Body of pancreas (tissue), 4 donors: ENCODE measurements at regions of chr17 and their contacts with region 1.

Region 1: DNA sequence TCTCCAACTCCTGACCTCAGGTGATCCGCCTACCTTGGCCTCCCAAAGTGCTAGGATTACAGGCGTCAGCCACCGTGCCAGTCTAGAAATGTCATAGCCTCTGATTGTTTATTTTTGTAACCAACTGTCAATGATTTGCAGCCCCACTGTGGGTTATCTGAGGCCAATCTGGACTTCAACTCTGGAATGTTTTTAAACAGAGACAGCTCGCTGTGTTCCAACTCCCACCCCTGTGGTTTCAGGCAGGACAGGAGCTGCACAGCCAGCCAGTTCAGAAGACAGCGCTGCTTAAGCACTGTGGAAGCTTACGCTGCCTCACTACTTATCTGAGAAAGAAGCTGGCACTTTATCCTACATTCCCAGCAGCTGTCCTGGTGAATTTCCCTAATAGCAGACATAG is 19.5 kb downstream of the MRM3 start:
- DNase-seq: peak in 3 of 4 donors; percentile 43 to 73 (median 65)
- ATAC-seq: peak; percentile 25
- H3K4me3 ChIP-seq: no peak overlapping the region
- H3K27ac ChIP-seq: peak overlapping the region; percentile 80 to 90 (median 88)
- H3K4me1 ChIP-seq: peaks cover 38% of the 10 kb centered on the region
- H3K27me3 ChIP-seq: no peaks in the 10 kb centered on the region
- CTCF ChIP-seq: no peak
- POLR2A ChIP-seq: no peak

Region 2: DNA sequence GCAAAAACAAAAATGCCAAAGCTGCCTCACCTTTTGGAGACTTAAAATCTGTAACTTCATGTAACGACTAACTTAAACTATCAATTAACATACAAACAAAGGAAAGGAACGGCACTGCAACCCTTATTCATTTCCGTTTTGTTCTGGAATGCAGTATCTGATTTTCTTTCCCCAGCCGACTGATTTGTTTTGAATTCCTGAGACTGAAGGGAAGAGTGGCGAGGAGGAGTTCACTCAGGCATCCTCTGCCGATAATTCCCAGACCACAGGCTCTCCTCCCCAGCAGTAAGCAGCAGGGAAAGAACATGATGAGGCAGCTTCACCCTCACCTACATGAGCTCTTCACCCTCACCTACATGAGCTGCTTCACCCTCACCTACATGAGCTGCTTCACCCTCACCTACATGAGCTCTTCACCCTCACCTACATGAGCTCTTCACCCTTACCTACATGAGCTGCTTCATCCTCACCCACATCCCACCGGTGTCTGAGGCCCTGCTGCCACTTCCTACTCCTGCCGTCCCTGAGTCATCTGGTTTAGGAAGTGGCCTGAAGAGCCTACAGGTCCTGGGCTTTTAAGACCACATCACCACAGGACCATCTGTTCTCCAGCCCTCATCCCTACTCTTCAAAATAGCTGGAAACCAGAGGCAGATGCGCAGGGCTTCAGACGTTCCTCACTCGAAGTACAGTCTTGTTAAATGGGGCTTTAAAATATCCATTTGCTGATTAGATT is 281.0 kb before region 1 on chr17:
- intact Hi-C with region 1: no loop called
- DNase-seq: no peak
- ATAC-seq: no peak
- H3K4me3 ChIP-seq: no peak overlapping the region
- H3K27ac ChIP-seq: no peak overlapping the region
- H3K4me1 ChIP-seq: no peaks in the 10 kb centered on the region
- H3K27me3 ChIP-seq: no peaks in the 10 kb centered on the region
- CTCF ChIP-seq: no peak
- POLR2A ChIP-seq: no peak

Region 3: GRCh38 chr17:879549-880442 is 78.1 kb after region 1 on chr17:
- intact Hi-C with region 1: loop called (anchors 10 kb)
- DNase-seq: peak; percentile 89 to 97 (median 96)
- ATAC-seq: peak; percentile 65
- H3K4me3 ChIP-seq: no peak overlapping the region
- H3K27ac ChIP-seq: peak overlapping the region; percentile 75 to 88 (median 86)
- H3K4me1 ChIP-seq: peaks cover 73% of the 10 kb centered on the region
- H3K27me3 ChIP-seq: no peaks in the 10 kb centered on the region
- CTCF ChIP-seq: peak; percentile 36 to 87 (median 74)
- POLR2A ChIP-seq: peak in 1 of 3 donors; percentile 17

Region 4: DNA sequence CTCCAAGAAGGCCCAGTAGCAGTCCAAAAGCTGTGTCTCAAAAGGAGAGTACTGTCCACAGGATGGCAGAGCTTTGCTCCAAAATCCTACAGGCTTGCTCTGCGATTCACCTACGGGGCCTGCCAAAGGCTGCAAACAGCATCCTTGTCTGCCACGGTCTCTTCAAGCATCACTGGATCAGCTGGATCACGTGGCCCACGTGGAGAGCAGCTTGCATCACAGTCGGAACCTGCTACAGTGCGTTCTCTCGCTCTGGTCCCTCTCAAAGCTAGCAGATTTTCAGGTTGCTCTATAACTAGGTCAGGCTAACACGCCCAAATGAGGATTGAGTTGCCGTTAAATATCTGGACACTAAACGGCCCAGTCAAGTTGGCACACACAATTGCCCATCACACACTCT is 186.9 kb after region 1 on chr17:
- intact Hi-C with region 1: loop called (anchors 5 kb)
- DNase-seq: no peak
- ATAC-seq: no peak
- H3K4me3 ChIP-seq: no peak overlapping the region
- H3K27ac ChIP-seq: no peak overlapping the region
- H3K4me1 ChIP-seq: no peaks in the 10 kb centered on the region
- H3K27me3 ChIP-seq: no peaks in the 10 kb centered on the region
- CTCF ChIP-seq: no peak
- POLR2A ChIP-seq: no peak